Right lobe of liver (tissue), 6 donors: ENCODE measurements at regions of chr6 and their contacts with region 1.

Region 1: DNA sequence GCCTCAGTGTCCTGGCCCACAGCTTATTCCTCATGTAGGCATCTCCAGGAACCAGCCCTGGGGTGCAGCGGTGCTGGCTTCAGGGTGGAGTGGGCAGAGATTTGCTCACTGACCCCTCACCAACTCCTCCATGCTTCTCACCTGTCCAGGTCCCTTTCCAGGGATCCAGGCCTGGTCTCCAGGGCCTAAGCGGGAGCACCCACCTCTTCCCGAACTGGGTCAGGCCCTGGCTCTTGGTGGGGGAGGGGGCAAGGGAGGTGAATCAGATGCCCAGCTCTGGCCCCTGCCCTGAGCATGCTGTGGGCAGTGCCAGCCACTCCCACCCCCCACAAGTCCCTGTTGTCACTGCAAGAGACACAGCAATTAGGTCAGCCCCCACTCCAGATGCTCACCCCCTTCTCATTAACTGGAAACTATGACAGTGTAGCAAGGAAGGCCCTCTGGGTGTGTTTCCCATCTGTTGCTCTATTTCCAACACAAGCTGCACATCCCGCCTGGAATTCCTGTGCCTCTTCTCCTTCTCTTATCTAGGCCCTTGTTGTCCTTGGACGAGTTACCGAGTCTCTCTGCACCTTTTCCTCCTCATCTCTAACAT is 37.0 kb downstream of the MDFI start:
- DNase-seq: peak in 1 of 3 donors; percentile 7
- ATAC-seq: no peak
- H3K4me3 ChIP-seq: no peak overlapping the region
- H3K27ac ChIP-seq: no peak overlapping the region
- H3K4me1 ChIP-seq: no peaks in the 10 kb centered on the region
- H3K27me3 ChIP-seq: no peaks in the 10 kb centered on the region
- CTCF ChIP-seq: no peak
- POLR2A ChIP-seq: no peak

Region 2: DNA sequence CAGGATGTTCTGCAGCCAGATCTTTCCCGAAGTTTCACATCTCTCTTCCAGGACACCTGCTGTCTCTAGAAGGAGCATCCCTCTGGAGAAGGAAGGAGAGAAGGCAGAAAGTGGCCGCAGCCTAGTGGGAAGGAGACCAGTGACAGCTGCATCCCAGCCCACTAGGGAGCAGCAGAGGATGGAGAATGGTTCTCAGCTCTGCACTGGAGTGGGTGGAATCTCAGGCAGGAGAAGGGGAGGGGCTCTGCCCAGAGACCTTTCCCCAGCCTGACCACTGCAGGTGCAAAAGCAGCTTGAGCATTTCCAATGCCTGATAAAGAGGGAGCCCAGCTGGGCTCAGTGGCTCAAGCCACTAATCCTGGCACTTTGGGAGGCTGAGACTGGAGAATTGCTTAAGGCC is 307.6 kb before region 1 on chr6:
- intact Hi-C with region 1: loop called (anchors 5 to 10 kb)
- DNase-seq: no peak
- ATAC-seq: peak; percentile 61 to 75 (median 68)
- H3K4me3 ChIP-seq: no peak overlapping the region
- H3K27ac ChIP-seq: no peak overlapping the region
- H3K4me1 ChIP-seq: peaks cover 0 to 12% (median 0%) of the 10 kb centered on the region in 4 donors
- H3K27me3 ChIP-seq: peaks cover 0 to 18% of the 10 kb centered on the region in 2 donors
- CTCF ChIP-seq: peak; percentile 43 to 54 (median 51)
- POLR2A ChIP-seq: no peak

Region 3: DNA sequence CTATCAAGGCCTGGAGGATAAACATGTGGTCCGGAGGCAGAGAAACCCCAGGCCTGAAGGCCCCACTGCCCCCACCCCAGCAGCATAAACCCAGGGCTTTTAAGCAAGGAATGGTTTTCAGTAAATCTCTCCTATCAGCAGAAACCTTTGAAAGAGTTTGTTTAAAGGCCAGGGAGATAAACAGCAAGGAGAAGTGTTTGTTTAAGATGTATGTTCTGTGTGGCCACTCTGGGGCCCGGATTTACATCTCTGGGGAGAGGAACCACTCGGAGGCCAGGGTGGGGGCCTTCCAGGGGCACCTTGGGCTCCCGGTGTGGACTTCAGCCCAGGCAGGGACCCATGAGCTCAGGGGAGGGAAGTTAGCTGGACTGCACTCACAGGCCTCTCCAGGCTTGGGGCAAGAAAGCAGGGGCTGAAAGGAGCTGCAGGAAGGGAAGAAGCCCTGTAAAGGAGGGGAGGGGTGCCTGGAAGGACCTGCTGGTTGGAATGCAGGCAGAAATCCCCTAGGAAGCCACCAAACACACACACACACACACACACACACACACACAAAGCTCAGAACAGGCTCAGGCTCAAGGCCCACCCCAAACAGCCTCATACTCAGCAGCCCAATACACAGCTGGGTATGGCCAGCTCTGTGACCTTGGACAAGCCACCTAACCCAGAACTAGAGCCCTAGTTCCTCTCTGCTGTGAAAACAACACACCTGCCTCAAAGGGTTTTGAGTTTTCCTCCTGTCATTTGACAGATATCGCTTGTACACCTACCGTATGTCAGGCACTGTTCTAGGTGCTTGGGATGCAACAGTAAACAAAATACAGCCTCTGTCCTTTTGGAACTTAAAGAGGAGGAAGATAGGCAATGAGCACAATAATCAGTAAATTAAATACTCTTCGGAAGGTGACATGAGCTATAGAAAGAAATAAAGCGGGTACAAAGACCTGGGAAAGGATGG is 155.3 kb before region 1 on chr6:
- intact Hi-C with region 1: no loop called
- DNase-seq: no peak
- ATAC-seq: no peak
- H3K4me3 ChIP-seq: no peak overlapping the region
- H3K27ac ChIP-seq: no peak overlapping the region
- H3K4me1 ChIP-seq: no peaks in the 10 kb centered on the region
- H3K27me3 ChIP-seq: no peaks in the 10 kb centered on the region
- CTCF ChIP-seq: no peak
- POLR2A ChIP-seq: no peak

Region 4: DNA sequence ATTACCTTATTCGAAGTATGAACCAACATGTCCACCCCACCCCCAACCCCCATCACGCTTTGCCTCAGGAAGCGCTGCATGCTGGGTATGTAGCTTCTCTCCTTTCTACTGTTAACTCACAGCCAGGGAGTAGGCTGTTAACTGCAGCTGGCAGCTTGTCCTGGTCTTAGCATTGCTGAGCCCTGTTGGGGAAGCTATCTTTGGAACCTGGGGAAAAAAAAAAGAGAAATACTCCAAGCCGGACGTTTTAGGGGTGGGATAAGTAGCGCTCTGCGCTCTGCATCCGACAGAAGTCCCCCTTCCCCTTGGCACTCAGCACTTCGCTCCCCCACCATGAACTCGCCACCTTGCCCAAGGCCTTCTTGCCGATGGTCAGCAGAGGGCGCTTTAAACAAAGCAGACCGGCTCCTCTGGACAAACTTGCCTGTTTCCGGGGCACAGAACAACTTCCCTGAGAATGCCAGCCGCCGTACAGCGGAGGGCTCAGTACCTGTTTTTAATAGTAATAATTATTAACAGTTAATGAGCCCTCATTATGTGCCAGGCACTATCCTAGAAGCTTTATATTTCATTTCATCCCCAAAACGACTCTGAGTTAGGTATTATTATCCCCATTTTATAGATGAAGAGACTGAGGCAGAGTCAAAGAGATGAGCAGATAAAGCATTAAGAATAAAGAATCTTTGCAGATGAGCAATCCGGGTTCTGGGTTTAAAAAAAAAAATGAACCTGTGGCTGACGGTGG is 72.2 kb before region 1 on chr6:
- intact Hi-C with region 1: loop called (anchors 2 to 5 kb)
- DNase-seq: peak; percentile 78 to 79 (median 78)
- ATAC-seq: peak; percentile 79 to 91 (median 87)
- H3K4me3 ChIP-seq: no peak overlapping the region
- H3K27ac ChIP-seq: no peak overlapping the region
- H3K4me1 ChIP-seq: peaks cover 0 to 5% (median 0%) of the 10 kb centered on the region in 4 donors
- H3K27me3 ChIP-seq: no peaks in the 10 kb centered on the region
- CTCF ChIP-seq: peak; percentile 70 to 89 (median 86)
- POLR2A ChIP-seq: no peak

Region 5: GRCh38 chr6:41625442-41625841 is 49.8 kb before region 1 on chr6:
- intact Hi-C with region 1: no loop called
- DNase-seq: no peak
- ATAC-seq: no peak
- H3K4me3 ChIP-seq: no peak overlapping the region
- H3K27ac ChIP-seq: no peak overlapping the region
- H3K4me1 ChIP-seq: no peaks in the 10 kb centered on the region
- H3K27me3 ChIP-seq: no peaks in the 10 kb centered on the region
- CTCF ChIP-seq: no peak
- POLR2A ChIP-seq: no peak